ENCODE measurements at regions of chr12 and their contacts with region 1.

Region 1: DNA sequence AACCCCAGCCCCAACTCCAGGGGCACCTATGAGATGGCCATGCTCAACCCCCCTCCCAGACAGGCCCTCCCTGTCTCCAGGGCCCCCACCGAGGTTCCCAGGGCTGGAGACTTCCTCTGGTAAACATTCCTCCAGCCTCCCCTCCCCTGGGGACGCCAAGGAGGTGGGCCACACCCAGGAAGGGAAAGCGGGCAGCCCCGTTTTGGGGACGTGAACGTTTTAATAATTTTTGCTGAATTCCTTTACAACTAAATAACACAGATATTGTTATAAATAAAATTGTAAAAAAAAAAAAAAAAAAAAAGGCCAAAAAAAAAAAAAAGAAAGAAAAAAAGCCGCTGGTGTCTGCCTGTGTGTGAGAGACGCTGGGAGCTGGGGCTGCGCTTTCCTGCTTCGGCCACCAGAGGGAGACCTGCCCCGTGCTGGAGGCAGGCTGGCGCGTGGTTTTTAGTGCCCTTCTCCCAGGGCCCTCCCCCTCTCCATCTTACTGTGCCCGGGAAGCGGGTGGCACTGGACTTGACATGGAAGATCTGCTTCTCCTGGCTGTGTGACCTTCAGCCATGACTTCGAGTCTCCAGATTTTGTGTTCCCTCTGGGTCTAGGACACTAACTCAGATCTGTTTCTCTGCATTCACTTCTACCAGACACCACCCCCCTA is 3.4 kb upstream of the NXPH4 start:
- DNase-seq: peak; percentile 85
- H3K4me3 Mint-ChIP-seq: no peak overlapping the region
- H3K27ac Mint-ChIP-seq: no peak overlapping the region
- H3K4me1 Mint-ChIP-seq: peaks cover 36% of the 10 kb centered on the region
- H3K27me3 Mint-ChIP-seq: peaks cover 41% of the 10 kb centered on the region

Region 2: DNA sequence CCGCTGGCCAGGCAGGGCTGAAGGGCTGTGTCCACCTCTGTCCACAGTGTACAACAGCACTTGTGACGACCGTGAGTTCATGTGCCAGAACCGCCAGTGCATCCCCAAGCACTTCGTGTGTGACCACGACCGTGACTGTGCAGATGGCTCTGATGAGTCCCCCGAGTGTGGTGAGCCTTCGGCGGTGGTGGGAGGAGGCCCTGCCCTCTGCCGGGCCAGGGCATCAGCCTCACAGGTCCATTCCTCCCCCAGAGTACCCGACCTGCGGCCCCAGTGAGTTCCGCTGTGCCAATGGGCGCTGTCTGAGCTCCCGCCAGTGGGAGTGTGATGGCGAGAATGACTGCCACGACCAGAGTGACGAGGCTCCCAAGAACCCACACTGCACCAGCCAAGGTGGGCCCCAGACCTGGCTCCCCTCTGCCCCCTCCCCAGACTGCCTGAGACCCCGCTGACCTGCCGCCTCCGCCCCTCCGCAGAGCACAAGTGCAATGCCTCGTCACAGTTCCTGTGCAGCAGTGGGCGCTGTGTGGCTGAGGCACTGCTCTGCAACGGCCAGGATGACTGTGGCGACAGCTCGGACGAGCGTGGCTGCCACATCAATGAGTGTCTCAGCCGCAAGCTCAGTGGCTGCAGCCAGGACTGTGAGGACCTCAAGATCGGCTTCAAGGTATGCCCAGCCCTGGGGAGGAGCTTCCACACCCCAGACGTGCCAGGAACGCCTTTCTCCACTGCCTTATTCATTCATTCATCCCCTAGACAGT is 17.4 kb before region 1 on chr12:
- CTCF ChIA-PET with region 1: interaction called, 13 read pairs
- POLR2A ChIA-PET with region 1: no interaction called
- DNase-seq: no peak
- H3K4me3 Mint-ChIP-seq: no peak overlapping the region
- H3K27ac Mint-ChIP-seq: no peak overlapping the region
- H3K4me1 Mint-ChIP-seq: no peaks in the 10 kb centered on the region
- H3K27me3 Mint-ChIP-seq: no peaks in the 10 kb centered on the region

Region 3: DNA sequence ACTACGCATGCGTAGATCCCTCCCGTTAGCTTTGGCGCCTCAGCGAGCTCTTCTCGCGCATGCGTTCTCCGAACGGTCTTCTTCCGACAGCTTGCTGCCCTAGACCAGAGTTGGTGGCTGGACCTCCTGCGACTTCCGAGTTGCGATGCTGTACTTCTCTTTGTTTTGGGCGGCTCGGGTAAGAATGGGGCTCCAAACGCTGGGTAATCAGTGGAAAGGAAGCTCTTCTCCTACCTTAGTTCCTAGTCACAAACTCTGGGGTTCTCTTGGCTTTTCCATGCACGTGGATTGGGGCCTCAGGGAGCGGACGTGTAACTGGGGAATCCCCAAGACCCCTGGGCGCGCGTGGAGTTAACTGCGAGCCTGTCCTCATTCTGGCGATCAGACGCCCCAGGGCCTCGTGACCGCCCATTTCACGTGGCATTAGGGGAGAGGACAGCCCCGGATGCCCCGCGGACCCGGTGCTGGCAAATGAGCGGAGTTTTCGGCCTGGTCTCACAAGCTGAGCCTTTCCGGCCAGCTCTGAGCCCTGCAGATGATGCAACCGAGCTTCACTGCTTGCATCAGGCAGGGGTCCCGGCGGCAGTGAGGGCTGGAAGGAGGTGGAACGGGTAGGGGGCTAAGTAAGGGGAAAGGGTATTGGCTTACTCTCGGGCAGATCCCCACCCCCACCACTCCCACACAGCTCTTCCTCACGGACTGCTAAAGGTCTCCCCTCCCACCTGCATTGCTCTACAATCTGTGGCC is 16.6 kb after region 1 on chr12 and contains the start of gene SHMT2:
- CTCF ChIA-PET with region 1: interaction called, 61 read pairs
- POLR2A ChIA-PET with region 1: no interaction called
- DNase-seq: peak; percentile 96
- H3K4me3 Mint-ChIP-seq: peak within 1 kb of the TSS; percentile 97
- H3K27ac Mint-ChIP-seq: peak within 1 kb of the TSS; percentile 96
- H3K4me1 Mint-ChIP-seq: peaks cover 68% of the 10 kb centered on the region
- H3K27me3 Mint-ChIP-seq: peaks cover 25% of the 10 kb centered on the region
- total RNA-seq, gene SHMT2: 137 to 141 TPM

Region 4: GRCh38 chr12:57280211-57281062 is 67.2 kb after region 1 on chr12:
- CTCF ChIA-PET with region 1: no interaction called
- POLR2A ChIA-PET with region 1: no interaction called
- DNase-seq: peak; percentile 68
- H3K4me3 Mint-ChIP-seq: peak overlapping the region; percentile 12
- H3K27ac Mint-ChIP-seq: peak overlapping the region; percentile 91
- H3K4me1 Mint-ChIP-seq: peaks cover 23% of the 10 kb centered on the region
- H3K27me3 Mint-ChIP-seq: no peaks in the 10 kb centered on the region

Measured in activated CD4-positive, alpha-beta T cell treated with anti-CD3 and anti-CD28 coated beads, Interleukin-2, amount 10 ng/mL, durations not matched to agents 7 days and 5 days (primary cell).